H1 (cell line): ENCODE measurements at regions of chr14 and their contacts with region 1.

Region 1: GRCh38 chr14:68248481-68249255 is 429.1 kb downstream of the RAD51B start:
- DNase-seq: peak in 1 of 2 experiments; percentile 65
- H3K4me3 ChIP-seq: no peak overlapping the region
- H3K27ac ChIP-seq: no peak overlapping the region
- H3K4me1 ChIP-seq: peaks cover 2 to 20% (median 13%) of the 10 kb centered on the region in 4 experiments; a peak in 5 of 7 replicates
- H3K27me3 ChIP-seq: no peaks in the 10 kb centered on the region
- CTCF ChIP-seq: peak in 2 of 3 experiments; percentile 48 to 49; a peak in 2 of 4 replicates
- EP300 ChIP-seq: no peak
- POLR2A ChIP-seq: no peak
- RAD21 ChIP-seq: peak; percentile 86 to 91

Region 2: DNA sequence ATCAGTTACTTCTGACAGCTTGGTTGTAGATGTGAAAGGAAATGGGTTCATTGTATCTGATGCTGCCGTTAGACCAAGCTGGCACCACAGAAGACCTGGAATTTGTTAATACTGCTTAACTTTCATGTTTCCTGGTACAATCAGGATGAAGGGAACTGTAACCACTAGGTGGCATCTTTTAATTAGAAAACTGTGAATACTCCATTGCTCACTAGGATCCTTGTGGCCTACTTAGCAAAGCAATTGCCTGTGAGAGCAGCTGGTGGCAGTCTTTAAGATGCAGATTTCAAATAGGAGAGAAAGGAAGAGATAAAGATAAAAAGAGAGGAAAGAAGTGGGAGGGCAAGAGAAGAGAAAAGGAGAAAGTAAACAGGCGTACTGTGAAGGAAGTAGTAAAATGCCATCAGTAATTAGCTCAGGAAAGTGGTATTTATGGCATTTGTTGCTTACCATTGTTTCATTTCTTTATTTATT is 314.6 kb before region 1 on chr14:
- CTCF ChIA-PET with region 1: interaction called, 16 read pairs
- POLR2A ChIA-PET with region 1: no interaction called
- DNase-seq: peak in 1 of 2 experiments; percentile 29
- H3K4me3 ChIP-seq: peak overlapping the region in 1 of 4 experiments; percentile 31; a peak in 1 of 8 replicates
- H3K27ac ChIP-seq: no peak overlapping the region
- H3K4me1 ChIP-seq: peaks cover 5 to 18% (median 14%) of the 10 kb centered on the region in 4 experiments; a peak in 5 of 7 replicates
- H3K27me3 ChIP-seq: no peaks in the 10 kb centered on the region
- CTCF ChIP-seq: peak in 2 of 3 experiments; percentile 72; a peak in 3 of 4 replicates
- EP300 ChIP-seq: 0 out of 3 replicates have a peak, but pooled peaks of 1 of the 2 experiments have one; percentile 53
- POLR2A ChIP-seq: no peak
- RAD21 ChIP-seq: peak; percentile 71 to 80

Region 3: DNA sequence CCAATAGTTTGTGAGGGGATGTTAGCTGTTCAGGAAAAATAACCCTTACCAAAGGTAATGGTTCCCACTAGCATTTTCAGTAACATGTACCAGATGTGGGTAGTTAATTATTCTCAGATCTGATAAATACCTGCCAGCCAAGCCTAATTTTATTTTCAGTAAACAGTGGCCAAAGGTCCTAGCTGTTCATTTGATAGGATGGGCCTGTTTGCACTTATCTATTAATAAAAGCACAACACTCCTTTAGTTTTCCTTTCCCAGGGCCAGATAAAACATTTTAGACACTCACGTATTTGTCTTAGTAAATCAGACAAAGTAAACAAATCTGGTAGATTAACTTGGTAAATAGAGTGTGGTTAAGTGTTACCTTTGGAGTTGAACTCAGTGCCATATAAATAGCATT is 84.0 kb before region 1 on chr14:
- CTCF ChIA-PET with region 1: no interaction called
- POLR2A ChIA-PET with region 1: no interaction called
- DNase-seq: no peak
- H3K4me3 ChIP-seq: no peak overlapping the region
- H3K27ac ChIP-seq: no peak overlapping the region
- H3K4me1 ChIP-seq: no peaks in the 10 kb centered on the region
- H3K27me3 ChIP-seq: no peaks in the 10 kb centered on the region
- CTCF ChIP-seq: no peak
- EP300 ChIP-seq: no peak
- POLR2A ChIP-seq: no peak
- RAD21 ChIP-seq: no peak

Region 4: DNA sequence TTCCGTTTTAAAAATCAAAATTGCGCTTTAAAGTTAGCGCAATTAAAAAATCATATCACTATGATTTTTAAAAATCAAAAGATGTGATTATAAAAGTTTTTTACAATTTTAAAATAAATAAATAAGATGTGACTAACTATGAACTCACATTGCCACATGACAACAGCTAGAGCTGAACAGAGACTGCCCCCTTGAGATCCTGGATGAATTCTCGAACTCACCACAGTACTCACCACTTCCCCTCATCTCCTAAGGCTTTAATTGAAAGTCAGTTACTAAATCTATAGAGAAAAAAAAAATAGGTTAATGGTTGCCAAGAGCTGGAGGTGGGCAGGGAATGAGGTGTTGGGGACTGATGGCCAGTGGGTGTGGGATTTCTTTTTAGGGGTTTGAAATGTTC is 160.0 kb after region 1 on chr14:
- CTCF ChIA-PET with region 1: interaction called, 11 read pairs
- POLR2A ChIA-PET with region 1: no interaction called
- DNase-seq: no peak
- H3K4me3 ChIP-seq: no peak overlapping the region
- H3K27ac ChIP-seq: no peak overlapping the region
- H3K4me1 ChIP-seq: peaks cover 0 to 8% (median 2%) of the 10 kb centered on the region in 4 experiments; a peak in 2 of 7 replicates
- H3K27me3 ChIP-seq: peaks cover 0 to 1% (median 0%) of the 10 kb centered on the region in 4 experiments; a peak in 1 of 7 replicates
- CTCF ChIP-seq: peak in 1 of 3 experiments; percentile 17; a peak in 2 of 4 replicates
- EP300 ChIP-seq: no peak
- POLR2A ChIP-seq: no peak
- RAD21 ChIP-seq: peak; percentile 46 to 60